Right lobe of liver (tissue), 6 donors: ENCODE measurements at regions of chr5 and their contacts with region 1.

Region 1: DNA sequence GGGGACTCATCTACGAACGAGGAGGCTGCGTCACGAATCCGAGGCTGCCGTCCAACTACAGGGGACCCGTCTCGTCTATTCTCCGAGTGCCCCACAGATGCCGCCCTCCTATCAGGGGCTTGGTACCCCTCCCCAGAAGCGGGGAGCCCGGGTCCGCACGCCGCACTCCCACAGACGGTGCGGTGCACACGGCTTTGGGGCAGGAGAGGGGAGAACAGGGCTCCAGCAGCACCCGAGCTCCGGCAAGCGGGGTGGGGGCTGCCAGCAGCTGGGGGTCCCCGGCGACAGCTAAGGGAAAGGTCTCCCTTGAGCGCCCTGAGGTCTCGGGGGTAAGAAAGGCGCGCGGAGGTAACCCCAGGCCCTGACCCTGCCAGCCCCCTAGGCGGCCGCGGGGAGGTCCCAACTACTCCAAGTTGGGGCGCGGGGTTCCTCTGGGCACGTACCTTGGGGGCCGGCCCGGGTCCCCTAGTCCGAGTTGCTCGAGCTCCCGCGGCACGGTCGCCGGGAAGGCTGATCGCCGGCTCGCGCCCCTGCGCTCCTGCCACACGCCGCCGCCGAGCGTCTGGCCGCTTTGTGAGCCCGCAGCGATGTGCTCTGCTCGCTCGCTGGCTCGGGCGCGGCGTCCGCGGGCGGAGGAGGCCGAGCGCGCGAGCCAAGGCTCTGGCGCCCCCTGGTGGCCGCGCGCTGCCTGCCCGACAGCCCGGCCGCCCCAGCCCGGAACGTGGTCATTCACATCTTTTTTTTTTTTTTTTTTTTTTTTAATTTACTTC is at the start of gene SPOCK1:
- DNase-seq: peak; percentile 70 to 76 (median 71)
- ATAC-seq: peak; percentile 96 to 100 (median 98)
- H3K4me3 ChIP-seq: no peak within 1 kb of the TSS
- H3K27ac ChIP-seq: no peak within 1 kb of the TSS
- H3K4me1 ChIP-seq: peaks cover 0 to 9% (median 0%) of the 10 kb centered on the region in 4 donors
- H3K27me3 ChIP-seq: peaks cover 0 to 7% of the 10 kb centered on the region in 2 donors
- CTCF ChIP-seq: peak; percentile 77 to 85 (median 80)
- POLR2A ChIP-seq: no peak
- total RNA-seq, gene SPOCK1: 0.06 to 0.86 (median 0.15) TPM in 5 of 6 experiments, not detected in the other

Region 2: GRCh38 chr5:137310051-137310730 is 188.7 kb before region 1 on chr5:
- intact Hi-C with region 1: loop called in 1 of 2 experiments (anchors 10 kb)
- DNase-seq: no peak
- ATAC-seq: no peak
- H3K4me3 ChIP-seq: no peak overlapping the region
- H3K27ac ChIP-seq: no peak overlapping the region
- H3K4me1 ChIP-seq: no peaks in the 10 kb centered on the region
- H3K27me3 ChIP-seq: no peaks in the 10 kb centered on the region
- CTCF ChIP-seq: no peak
- POLR2A ChIP-seq: no peak

Region 3: GRCh38 chr5:137320056-137321045 is 178.6 kb before region 1 on chr5:
- intact Hi-C with region 1: loop called (anchors 10 kb)
- DNase-seq: peak in 1 of 3 donors; percentile 49
- ATAC-seq: peak; percentile 78 to 91 (median 84)
- H3K4me3 ChIP-seq: no peak overlapping the region
- H3K27ac ChIP-seq: no peak overlapping the region
- H3K4me1 ChIP-seq: no peaks in the 10 kb centered on the region
- H3K27me3 ChIP-seq: no peaks in the 10 kb centered on the region
- CTCF ChIP-seq: peak; percentile 72 to 79 (median 76)
- POLR2A ChIP-seq: no peak

Region 4: GRCh38 chr5:137344723-137345322 is 154.1 kb before region 1 on chr5:
- intact Hi-C with region 1: loop called in 1 of 2 experiments (anchors 10 kb)
- DNase-seq: peak in 1 of 3 donors; percentile 50
- ATAC-seq: peak in 2 of 4 donors; percentile 45 to 52
- H3K4me3 ChIP-seq: no peak overlapping the region
- H3K27ac ChIP-seq: no peak overlapping the region
- H3K4me1 ChIP-seq: peaks cover 0 to 18% (median 0%) of the 10 kb centered on the region in 4 donors
- H3K27me3 ChIP-seq: no peaks in the 10 kb centered on the region
- CTCF ChIP-seq: peak; percentile 55 to 85 (median 74)
- POLR2A ChIP-seq: no peak

Region 5: DNA sequence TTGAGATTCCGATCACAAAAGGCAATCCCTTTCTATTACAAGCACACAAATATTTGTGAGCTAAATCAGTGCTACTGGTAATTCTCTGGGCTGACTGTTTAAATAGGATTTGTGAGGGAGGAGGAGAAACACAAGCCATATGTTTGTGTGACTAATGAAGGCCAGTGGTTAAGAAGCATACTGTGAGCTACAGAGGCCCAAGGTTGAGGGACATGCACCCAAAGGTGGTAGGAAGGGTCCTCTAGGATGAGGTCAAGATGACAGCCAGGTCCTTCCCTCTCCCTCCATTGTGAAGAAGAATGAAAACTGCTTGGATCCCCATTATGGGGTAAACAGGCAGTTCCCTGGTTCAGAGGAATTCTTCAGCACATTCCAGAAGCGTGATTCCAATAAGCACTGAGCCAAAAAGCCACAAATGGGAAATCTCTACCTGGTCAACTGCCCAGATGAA is 83.7 kb before region 1 on chr5:
- intact Hi-C with region 1: no loop called
- DNase-seq: no peak
- ATAC-seq: no peak
- H3K4me3 ChIP-seq: no peak overlapping the region
- H3K27ac ChIP-seq: no peak overlapping the region
- H3K4me1 ChIP-seq: no peaks in the 10 kb centered on the region
- H3K27me3 ChIP-seq: no peaks in the 10 kb centered on the region
- CTCF ChIP-seq: no peak
- POLR2A ChIP-seq: no peak

Region 6: GRCh38 chr5:137778772-137779564 is 280.0 kb after region 1 on chr5:
- intact Hi-C with region 1: no loop called
- DNase-seq: no peak
- ATAC-seq: peak; percentile 48 to 74 (median 60)
- H3K4me3 ChIP-seq: no peak overlapping the region
- H3K27ac ChIP-seq: no peak overlapping the region
- H3K4me1 ChIP-seq: no peaks in the 10 kb centered on the region
- H3K27me3 ChIP-seq: no peaks in the 10 kb centered on the region
- CTCF ChIP-seq: peak; percentile 62 to 82 (median 80)
- POLR2A ChIP-seq: no peak